Kidney (tissue), 22 donors: ENCODE measurements at regions of chr6 and their contacts with region 1.

Region 1: GRCh38 chr6:32971581-32972352 is 3.4 kb downstream of the BRD2 start:
- DNase-seq: peak; percentile 100
- H3K4me3 ChIP-seq: peak overlapping the region; percentile 99
- H3K27ac ChIP-seq: peak overlapping the region; percentile 100
- H3K4me1 ChIP-seq: peaks cover 6 to 26% (median 19%) of the 10 kb centered on the region in 3 donors
- H3K27me3 ChIP-seq: no peaks in the 10 kb centered on the region
- CTCF ChIP-seq: no peak

Region 2: GRCh38 chr6:32894080-32895005 is 77.4 kb before region 1 on chr6:
- intact Hi-C with region 1: loop called (anchors 10 kb)
- DNase-seq: peak; percentile 96 to 98 (median 97)
- H3K4me3 ChIP-seq: peak overlapping the region; percentile 80 to 88 (median 86)
- H3K27ac ChIP-seq: peak overlapping the region; percentile 86 to 91
- H3K4me1 ChIP-seq: peaks cover 0 to 12% (median 6%) of the 10 kb centered on the region in 3 donors
- H3K27me3 ChIP-seq: no peaks in the 10 kb centered on the region
- CTCF ChIP-seq: no peak